ENCODE measurements at regions of chr5 and their contacts with region 1.

Region 1: GRCh38 chr5:56440871-56441740 is 208.0 kb upstream of the ANKRD55 start:
- DNase-seq: peak; percentile 70 to 75
- H3K4me3 ChIP-seq: no peak overlapping the region
- H3K4me3 Mint-ChIP-seq: peak overlapping the region; percentile 59
- H3K27ac Mint-ChIP-seq: peak overlapping the region; percentile 81
- H3K4me1 ChIP-seq: peaks cover 42% of the 10 kb centered on the region
- H3K4me1 Mint-ChIP-seq: peaks cover 23% of the 10 kb centered on the region
- H3K27me3 ChIP-seq: no peaks in the 10 kb centered on the region
- H3K27me3 Mint-ChIP-seq: no peaks in the 10 kb centered on the region
- CTCF ChIP-seq: no peak

Region 2: DNA sequence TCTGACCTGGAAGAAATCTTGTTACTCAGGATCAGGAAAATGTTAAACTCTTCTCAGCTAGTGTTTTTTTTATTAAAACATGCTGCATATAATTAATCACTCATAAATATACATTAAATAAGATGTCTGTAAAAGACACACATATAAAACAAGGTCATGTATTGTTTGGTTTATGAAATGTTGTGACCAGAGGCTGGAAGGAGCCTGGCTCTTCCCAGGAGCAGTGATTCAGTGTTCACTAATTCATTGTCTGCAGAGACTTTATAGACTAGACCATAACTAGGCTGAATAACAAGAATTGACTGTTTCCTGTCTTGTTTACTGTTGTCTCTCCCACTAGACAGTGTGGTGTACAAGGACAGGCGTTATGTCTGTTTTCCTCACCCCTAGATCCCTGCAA is 158.9 kb before region 1 on chr5:
- CTCF ChIA-PET with region 1: no interaction called
- POLR2A ChIA-PET with region 1: no interaction called
- intact Hi-C with region 1: loop called (anchors 1 kb)
- DNase-seq: no peak
- H3K4me3 ChIP-seq: no peak overlapping the region
- H3K4me3 Mint-ChIP-seq: no peak overlapping the region
- H3K27ac Mint-ChIP-seq: no peak overlapping the region
- H3K4me1 ChIP-seq: peaks cover 53% of the 10 kb centered on the region
- H3K4me1 Mint-ChIP-seq: peaks cover 10% of the 10 kb centered on the region
- H3K27me3 ChIP-seq: no peaks in the 10 kb centered on the region
- H3K27me3 Mint-ChIP-seq: no peaks in the 10 kb centered on the region
- CTCF ChIP-seq: no peak

Region 3: DNA sequence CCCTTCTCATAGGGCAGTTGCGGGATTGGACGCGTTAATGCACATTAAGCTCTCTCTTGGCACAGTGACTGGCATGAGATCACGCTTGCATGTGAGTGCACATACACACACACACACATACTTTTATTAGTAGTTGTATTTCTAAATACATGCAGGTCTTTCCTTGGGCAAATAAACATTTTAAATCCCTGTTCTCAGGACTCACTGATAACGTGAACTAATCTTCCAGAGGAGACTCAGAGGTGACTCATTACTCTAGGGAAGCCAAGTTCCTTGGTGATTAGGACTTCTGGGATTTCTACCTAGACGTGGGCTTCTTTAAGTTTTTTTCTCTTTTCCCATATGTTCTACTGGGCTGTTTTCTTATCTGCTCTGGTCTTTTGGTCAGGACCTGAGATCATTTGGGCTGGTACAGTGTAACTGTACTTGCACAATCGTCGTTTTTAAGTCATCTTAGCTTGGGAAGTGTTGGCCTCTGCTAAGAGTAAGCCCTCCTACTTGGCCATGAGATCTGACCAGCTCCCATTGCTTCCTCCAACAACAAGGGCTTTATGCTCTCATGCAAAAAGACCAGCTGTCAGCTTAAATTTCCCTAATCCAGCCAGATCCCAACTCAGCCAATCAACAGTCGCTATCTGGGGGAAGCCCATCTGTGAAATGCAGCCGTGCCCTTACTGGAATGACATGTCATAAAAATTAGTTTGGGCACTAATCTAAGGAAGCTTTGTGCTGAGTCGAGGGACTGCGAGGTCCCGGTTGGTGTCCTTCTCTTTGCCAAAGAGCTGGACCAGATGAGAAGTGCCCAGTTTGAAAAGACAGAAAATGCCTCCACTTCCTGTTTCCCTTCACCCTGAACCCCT is 31.5 kb before region 1 on chr5:
- CTCF ChIA-PET with region 1: no interaction called
- POLR2A ChIA-PET with region 1: no interaction called
- intact Hi-C with region 1: loop called (anchors 1 kb)
- DNase-seq: peak; percentile 31 to 62
- H3K4me3 ChIP-seq: no peak overlapping the region
- H3K4me3 Mint-ChIP-seq: peak overlapping the region; percentile 2
- H3K27ac Mint-ChIP-seq: peak overlapping the region; percentile 77
- H3K4me1 ChIP-seq: peaks cover 96% of the 10 kb centered on the region
- H3K4me1 Mint-ChIP-seq: peaks cover 61% of the 10 kb centered on the region
- H3K27me3 ChIP-seq: no peaks in the 10 kb centered on the region
- H3K27me3 Mint-ChIP-seq: no peaks in the 10 kb centered on the region
- CTCF ChIP-seq: no peak

Region 4: GRCh38 chr5:56415356-56415765 is 25.7 kb before region 1 on chr5:
- CTCF ChIA-PET with region 1: no interaction called
- POLR2A ChIA-PET with region 1: no interaction called
- intact Hi-C with region 1: loop called (anchors 1 kb)
- DNase-seq: peak; percentile 82 to 90
- H3K4me3 ChIP-seq: no peak overlapping the region
- H3K4me3 Mint-ChIP-seq: peak overlapping the region; percentile 64
- H3K27ac Mint-ChIP-seq: peak overlapping the region; percentile 95
- H3K4me1 ChIP-seq: peaks cover 73% of the 10 kb centered on the region
- H3K4me1 Mint-ChIP-seq: peaks cover 45% of the 10 kb centered on the region
- H3K27me3 ChIP-seq: no peaks in the 10 kb centered on the region
- H3K27me3 Mint-ChIP-seq: no peaks in the 10 kb centered on the region
- CTCF ChIP-seq: no peak

Region 5: GRCh38 chr5:56981548-56982315 is 540.6 kb after region 1 on chr5:
- CTCF ChIA-PET with region 1: no interaction called
- POLR2A ChIA-PET with region 1: no interaction called
- intact Hi-C with region 1: no loop called
- DNase-seq: no peak
- H3K4me3 ChIP-seq: no peak overlapping the region
- H3K4me3 Mint-ChIP-seq: no peak overlapping the region
- H3K27ac Mint-ChIP-seq: no peak overlapping the region
- H3K4me1 ChIP-seq: peaks cover 49% of the 10 kb centered on the region
- H3K4me1 Mint-ChIP-seq: peaks cover 27% of the 10 kb centered on the region
- H3K27me3 ChIP-seq: no peaks in the 10 kb centered on the region
- H3K27me3 Mint-ChIP-seq: no peaks in the 10 kb centered on the region
- CTCF ChIP-seq: no peak